Caco-2 (cell line): ENCODE measurements at regions of chr13 and their contacts with region 1.

Region 1: GRCh38 chr13:43113603-43114002 is 90.2 kb downstream of the DNAJC15 start:
- DNase-seq: peak; percentile 61 to 69
- H3K4me3 ChIP-seq: no peak overlapping the region
- H3K4me3 Mint-ChIP-seq: peak overlapping the region; percentile 13
- H3K27ac Mint-ChIP-seq: no peak overlapping the region
- H3K4me1 ChIP-seq: peaks cover 32% of the 10 kb centered on the region
- H3K4me1 Mint-ChIP-seq: peaks cover 45% of the 10 kb centered on the region
- H3K27me3 ChIP-seq: no peaks in the 10 kb centered on the region
- H3K27me3 Mint-ChIP-seq: no peaks in the 10 kb centered on the region
- CTCF ChIP-seq: no peak

Region 2: DNA sequence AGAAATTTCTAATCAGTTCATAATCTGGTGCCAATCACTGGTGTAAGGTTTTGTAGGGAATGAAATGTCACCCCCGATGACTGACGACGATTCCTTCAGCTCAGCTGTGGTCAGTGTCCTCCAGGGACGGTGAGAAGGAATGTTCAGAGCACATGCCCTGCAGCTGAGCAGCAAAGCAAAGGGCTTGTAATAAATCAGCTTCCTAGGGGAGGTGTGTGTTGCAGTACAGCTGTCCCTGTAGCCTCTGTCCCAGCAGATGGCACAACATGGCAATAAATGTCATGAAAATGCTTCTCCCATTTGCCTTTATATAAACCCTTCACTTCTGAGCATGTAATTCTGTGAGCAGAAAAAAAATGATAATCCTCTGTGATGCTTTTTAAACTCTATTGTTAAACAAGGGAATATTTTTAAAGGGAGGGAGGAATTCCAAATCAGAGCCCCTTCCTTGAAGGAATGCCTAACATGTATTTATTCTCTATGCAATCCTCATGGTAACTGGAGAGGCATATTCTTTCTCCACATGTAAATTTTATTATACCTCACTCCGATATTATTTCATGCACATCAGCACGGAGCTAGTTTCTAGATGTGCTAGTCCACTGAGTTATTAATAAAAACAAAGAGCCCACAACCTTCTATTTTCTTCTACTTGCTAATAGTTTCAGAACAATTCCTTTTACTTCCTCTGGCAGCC is 229.7 kb before region 1 on chr13:
- CTCF ChIA-PET with region 1: no interaction called
- POLR2A ChIA-PET with region 1: no interaction called
- intact Hi-C with region 1: loop called (anchors 5 kb)
- DNase-seq: peak; percentile 43 to 46
- H3K4me3 ChIP-seq: no peak overlapping the region
- H3K4me3 Mint-ChIP-seq: no peak overlapping the region
- H3K27ac Mint-ChIP-seq: no peak overlapping the region
- H3K4me1 ChIP-seq: peaks cover 8% of the 10 kb centered on the region; the same call in 1 of the 2 replicates
- H3K4me1 Mint-ChIP-seq: no peaks in the 10 kb centered on the region
- H3K27me3 ChIP-seq: no peaks in the 10 kb centered on the region
- H3K27me3 Mint-ChIP-seq: no peaks in the 10 kb centered on the region
- CTCF ChIP-seq: peak in 1 of 2 experiments; percentile 51

Region 3: GRCh38 chr13:43170506-43170905 is 56.9 kb after region 1 on chr13:
- CTCF ChIA-PET with region 1: no interaction called
- POLR2A ChIA-PET with region 1: no interaction called
- intact Hi-C with region 1: no loop called
- DNase-seq: no peak
- H3K4me3 ChIP-seq: no peak overlapping the region
- H3K4me3 Mint-ChIP-seq: no peak overlapping the region
- H3K27ac Mint-ChIP-seq: no peak overlapping the region
- H3K4me1 ChIP-seq: no peaks in the 10 kb centered on the region
- H3K4me1 Mint-ChIP-seq: no peaks in the 10 kb centered on the region
- H3K27me3 ChIP-seq: no peaks in the 10 kb centered on the region
- H3K27me3 Mint-ChIP-seq: no peaks in the 10 kb centered on the region
- CTCF ChIP-seq: no peak